PC-9 (cell line): ENCODE measurements at regions of chr2 and their contacts with region 1.

Region 1: GRCh38 chr2:38528008-38528442 is 74.7 kb downstream of the HNRNPLL start:
- DNase-seq: peak; percentile 22 to 44
- H3K4me3 ChIP-seq: peak overlapping the region; percentile 59
- H3K27ac ChIP-seq: no peak overlapping the region
- H3K4me1 ChIP-seq: peaks cover 20% of the 10 kb centered on the region
- H3K27me3 ChIP-seq: no peaks in the 10 kb centered on the region
- CTCF ChIP-seq: no peak

Region 2: GRCh38 chr2:38245114-38245641 is 282.8 kb before region 1 on chr2:
- CTCF ChIA-PET with region 1: no interaction called
- POLR2A ChIA-PET with region 1: no interaction called
- intact Hi-C with region 1: no loop called
- DNase-seq: peak; percentile 50 to 88
- H3K4me3 ChIP-seq: no peak overlapping the region
- H3K27ac ChIP-seq: peak overlapping the region; percentile 20; the same call in 1 of the 2 replicates
- H3K4me1 ChIP-seq: peaks cover 19% of the 10 kb centered on the region
- H3K27me3 ChIP-seq: no peaks in the 10 kb centered on the region
- CTCF ChIP-seq: no peak

Region 3: GRCh38 chr2:38561691-38562090 is 33.7 kb after region 1 on chr2:
- CTCF ChIA-PET with region 1: no interaction called
- POLR2A ChIA-PET with region 1: interaction called, 12 read pairs
- intact Hi-C with region 1: no loop called
- DNase-seq: no peak
- H3K4me3 ChIP-seq: no peak overlapping the region
- H3K27ac ChIP-seq: no peak overlapping the region
- H3K4me1 ChIP-seq: no peaks in the 10 kb centered on the region
- H3K27me3 ChIP-seq: no peaks in the 10 kb centered on the region
- CTCF ChIP-seq: no peak